ENCODE measurements at regions of chr20 and their contacts with region 1.

Region 1: GRCh38 chr20:45823949-45824835 is 2.9 kb downstream of the TNNC2 start:
- DNase-seq: peak; percentile 81
- ATAC-seq: peak; percentile 86
- H3K4me3 Mint-ChIP-seq: peak overlapping the region; percentile 61
- H3K27ac Mint-ChIP-seq: 0 out of 2 replicates have a peak overlapping the region, but pooled peaks have one; percentile 48
- H3K4me1 Mint-ChIP-seq: peaks cover 26% of the 10 kb centered on the region
- H3K27me3 Mint-ChIP-seq: peaks cover 23% of the 10 kb centered on the region
- CTCF ChIP-seq: no peak

Region 2: DNA sequence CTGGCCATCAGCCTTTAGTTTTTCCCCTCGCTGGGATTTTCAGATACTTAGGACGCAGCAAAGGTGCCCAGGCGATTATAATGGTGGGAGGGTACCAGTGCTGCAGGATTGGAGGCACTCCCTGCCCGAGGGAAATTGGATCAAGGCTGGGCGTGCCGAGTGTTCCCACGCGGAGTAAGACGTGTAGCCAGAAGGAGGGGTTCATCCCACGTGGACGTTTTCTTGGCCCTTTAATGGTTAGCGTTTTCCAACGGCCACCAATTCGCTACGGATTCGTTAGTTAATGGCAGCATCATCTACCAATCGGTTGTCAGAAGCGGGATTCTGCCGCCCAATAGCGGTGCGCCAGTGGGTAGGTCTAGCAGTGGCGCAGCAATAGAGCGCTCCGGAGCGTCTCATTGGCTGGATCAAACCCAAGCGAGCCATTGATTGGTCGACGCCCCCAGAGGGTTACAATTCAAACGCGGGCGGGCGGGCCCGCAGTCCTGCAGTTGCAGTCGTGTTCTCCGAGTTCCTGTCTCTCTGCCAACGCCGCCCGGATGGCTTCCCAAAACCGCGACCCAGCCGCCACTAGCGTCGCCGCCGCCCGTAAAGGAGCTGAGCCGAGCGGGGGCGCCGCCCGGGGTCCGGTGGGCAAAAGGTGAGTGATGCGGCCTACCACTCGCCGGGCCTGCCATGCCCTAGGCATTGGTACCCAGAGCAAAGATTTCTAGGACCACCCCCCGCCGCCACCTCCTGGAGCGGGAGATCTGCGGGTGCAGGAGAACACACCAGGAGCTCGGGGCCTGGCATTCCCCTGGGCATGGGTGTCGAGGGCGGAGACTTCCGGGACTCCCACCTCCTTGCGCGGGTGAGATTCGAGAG is 11.8 kb before region 1 on chr20 and contains the start of gene UBE2C:
- CTCF ChIA-PET with region 1: interaction called, 13 read pairs
- POLR2A ChIA-PET with region 1: no interaction called
- DNase-seq: peak; percentile 97
- ATAC-seq: peak; percentile 98
- H3K4me3 Mint-ChIP-seq: peak within 1 kb of the TSS; percentile 99
- H3K27ac Mint-ChIP-seq: peak within 1 kb of the TSS; percentile 85
- H3K4me1 Mint-ChIP-seq: peaks cover 24% of the 10 kb centered on the region
- H3K27me3 Mint-ChIP-seq: no peaks in the 10 kb centered on the region
- CTCF ChIP-seq: no peak
- total RNA-seq, gene UBE2C: 249 to 251 TPM (median 249 TPM) in 3 replicates

Region 3: DNA sequence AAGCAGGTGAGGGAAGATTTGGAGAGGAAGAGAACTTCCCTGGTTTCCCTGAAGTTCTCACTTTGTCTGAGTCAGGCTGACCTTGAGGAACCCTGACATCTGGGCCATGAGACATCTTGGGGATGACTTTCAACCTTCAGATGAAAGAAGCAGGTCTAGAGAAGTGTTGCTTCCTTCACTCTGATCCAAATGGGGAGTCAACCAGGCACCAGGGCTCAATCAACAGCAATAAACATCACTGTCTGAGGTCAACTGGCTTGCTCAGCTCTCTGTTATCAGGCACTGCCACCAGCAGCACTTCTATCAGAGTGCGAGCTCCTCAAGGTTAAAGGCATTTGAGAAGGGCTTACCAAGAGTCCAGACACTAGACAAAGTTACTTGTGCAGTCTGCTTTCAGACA is 26.7 kb after region 1 on chr20:
- CTCF ChIA-PET with region 1: interaction called, 11 read pairs
- POLR2A ChIA-PET with region 1: no interaction called
- DNase-seq: no peak
- ATAC-seq: no peak
- H3K4me3 Mint-ChIP-seq: no peak overlapping the region
- H3K27ac Mint-ChIP-seq: peak overlapping the region; percentile 84
- H3K4me1 Mint-ChIP-seq: peaks cover 44% of the 10 kb centered on the region
- H3K27me3 Mint-ChIP-seq: no peaks in the 10 kb centered on the region
- CTCF ChIP-seq: no peak

Region 4: DNA sequence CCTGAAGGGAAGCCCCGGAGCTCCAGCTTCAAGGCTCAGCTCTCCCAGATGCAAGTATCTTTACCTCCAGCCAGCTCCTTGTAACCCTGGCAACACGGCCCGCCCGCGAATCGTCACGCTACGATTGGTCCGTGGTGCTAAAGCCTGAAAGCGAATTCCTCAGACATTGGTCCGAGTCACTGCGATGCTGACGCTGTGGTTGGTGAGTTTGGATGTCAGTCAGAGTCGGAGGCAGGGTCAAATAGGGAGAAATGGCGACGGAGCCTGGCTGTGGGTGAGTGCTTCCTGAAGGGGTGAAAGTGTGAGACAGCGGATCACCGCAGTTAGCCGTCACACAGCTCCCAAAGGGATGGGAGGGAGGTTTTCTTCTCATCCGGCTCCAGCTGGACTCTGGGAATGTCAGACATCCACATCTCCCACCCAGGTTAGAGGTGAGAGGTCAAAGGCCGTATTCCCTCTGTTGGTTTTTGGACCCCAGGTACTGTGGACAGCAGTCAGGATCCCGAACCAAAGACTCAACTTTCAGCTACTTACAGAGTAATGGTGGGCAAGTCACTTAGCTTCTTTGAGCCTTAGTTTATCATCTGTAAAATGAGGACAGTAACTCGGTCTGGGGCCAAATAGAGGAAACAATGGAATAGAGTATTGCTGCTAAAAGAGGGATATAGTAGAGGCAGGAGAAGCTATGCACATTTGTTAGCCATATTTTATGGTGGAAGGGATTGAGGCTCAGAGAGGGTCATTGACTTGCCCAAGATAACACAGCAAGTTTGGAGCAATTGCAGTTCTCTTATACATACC is 57.0 kb after region 1 on chr20 and contains the start of gene ZSWIM1:
- CTCF ChIA-PET with region 1: interaction called, 11 read pairs
- POLR2A ChIA-PET with region 1: no interaction called
- DNase-seq: peak; percentile 100
- ATAC-seq: peak; percentile 99
- H3K4me3 Mint-ChIP-seq: peak within 1 kb of the TSS; percentile 98
- H3K27ac Mint-ChIP-seq: peak within 1 kb of the TSS; percentile 97
- H3K4me1 Mint-ChIP-seq: peaks cover 13% of the 10 kb centered on the region
- H3K27me3 Mint-ChIP-seq: no peaks in the 10 kb centered on the region
- CTCF ChIP-seq: no peak
- total RNA-seq, gene ZSWIM1: 15.2 to 17.4 TPM (median 17.0 TPM) in 3 replicates

Region 5: DNA sequence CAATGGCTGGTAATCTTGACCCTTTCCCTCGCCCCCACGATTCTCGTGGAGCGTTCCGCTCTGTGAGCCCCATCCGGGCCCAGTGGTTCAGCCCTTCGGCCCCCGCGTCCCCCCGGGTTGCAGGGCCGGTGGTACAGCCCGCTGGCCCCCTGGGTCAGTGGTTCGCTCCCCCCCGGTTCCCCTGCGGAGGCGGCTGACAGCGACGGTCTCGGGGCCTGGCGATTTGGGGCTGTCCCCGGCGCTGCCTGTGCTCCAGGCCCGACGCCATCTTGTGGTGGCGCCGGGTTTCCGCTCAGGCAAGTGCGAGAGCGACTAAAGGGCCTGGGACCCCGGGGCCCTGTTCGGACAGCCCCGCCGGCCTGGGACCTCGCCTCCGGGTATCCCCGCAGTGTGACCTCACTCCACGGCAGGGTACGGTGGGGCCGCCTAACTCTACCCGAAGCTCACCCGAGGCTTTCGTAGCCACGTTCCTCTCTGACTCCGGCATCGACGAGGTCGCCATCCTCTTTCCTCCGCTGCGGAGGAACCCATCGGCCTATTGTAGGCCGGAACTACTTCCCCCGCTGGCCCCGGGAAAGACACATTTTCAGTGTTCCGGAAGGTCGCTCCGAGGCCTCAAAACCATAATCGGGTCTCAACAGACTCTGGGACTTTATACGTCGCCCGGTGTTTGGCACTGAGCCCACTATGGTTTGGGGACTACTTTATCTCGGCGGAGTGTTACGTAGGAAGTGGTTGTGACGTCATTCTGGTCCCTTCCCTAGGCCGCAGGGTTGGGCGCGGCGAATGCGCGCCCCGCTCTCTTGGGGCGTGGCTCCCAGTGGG is 147.7 kb after region 1 on chr20 and contains the start of gene ZNF335:
- CTCF ChIA-PET with region 1: interaction called, 13 read pairs
- POLR2A ChIA-PET with region 1: interaction called, 3 read pairs
- DNase-seq: peak; percentile 94
- ATAC-seq: peak; percentile 85
- H3K4me3 Mint-ChIP-seq: peak within 1 kb of the TSS; percentile 84
- H3K27ac Mint-ChIP-seq: peak within 1 kb of the TSS; percentile 98
- H3K4me1 Mint-ChIP-seq: peaks cover 14% of the 10 kb centered on the region
- H3K27me3 Mint-ChIP-seq: no peaks in the 10 kb centered on the region; the same call in 1 of the 2 replicates
- CTCF ChIP-seq: no peak
- total RNA-seq, gene ZNF335: 16.3 to 20.0 TPM (median 16.4 TPM) in 3 replicates